Calu3 (cell line): ENCODE measurements at regions of chr7 and their contacts with region 1.

Region 1: GRCh38 chr7:124171068-124171467 is 138.2 kb upstream of the TMEM229A start:
- DNase-seq: peak; percentile 47
- H3K4me3 Mint-ChIP-seq: no peak overlapping the region
- H3K27ac Mint-ChIP-seq: no peak overlapping the region
- H3K4me1 Mint-ChIP-seq: no peaks in the 10 kb centered on the region
- H3K27me3 Mint-ChIP-seq: no peaks in the 10 kb centered on the region
- CTCF ChIP-seq: peak; percentile 20

Region 2: GRCh38 chr7:124840435-124840834 is 669.4 kb after region 1 on chr7:
- CTCF ChIA-PET with region 1: no interaction called
- intact Hi-C with region 1: loop called (anchors 2 kb)
- DNase-seq: no peak
- H3K4me3 Mint-ChIP-seq: no peak overlapping the region
- H3K27ac Mint-ChIP-seq: no peak overlapping the region
- H3K4me1 Mint-ChIP-seq: no peaks in the 10 kb centered on the region
- H3K27me3 Mint-ChIP-seq: no peaks in the 10 kb centered on the region
- CTCF ChIP-seq: no peak